AG04449 (cell line): ENCODE measurements at regions of chr18 and their contacts with region 1.

Region 1: GRCh38 chr18:46281185-46282176 is 177.3 kb downstream of the HAUS1 start:
- DNase-seq: no peak
- H3K4me3 ChIP-seq: no peak overlapping the region
- CTCF ChIP-seq: peak; percentile 97

Region 2: GRCh38 chr18:46042571-46043123 is 238.8 kb before region 1 on chr18:
- CTCF ChIA-PET with region 1: no interaction called
- POLR2A ChIA-PET with region 1: no interaction called
- DNase-seq: no peak
- H3K4me3 ChIP-seq: no peak overlapping the region
- CTCF ChIP-seq: no peak

Region 3: GRCh38 chr18:46148810-46149209 is 132.7 kb before region 1 on chr18:
- CTCF ChIA-PET with region 1: interaction called, 50 read pairs
- POLR2A ChIA-PET with region 1: no interaction called
- DNase-seq: no peak
- H3K4me3 ChIP-seq: no peak overlapping the region
- CTCF ChIP-seq: peak; percentile 35

Region 4: DNA sequence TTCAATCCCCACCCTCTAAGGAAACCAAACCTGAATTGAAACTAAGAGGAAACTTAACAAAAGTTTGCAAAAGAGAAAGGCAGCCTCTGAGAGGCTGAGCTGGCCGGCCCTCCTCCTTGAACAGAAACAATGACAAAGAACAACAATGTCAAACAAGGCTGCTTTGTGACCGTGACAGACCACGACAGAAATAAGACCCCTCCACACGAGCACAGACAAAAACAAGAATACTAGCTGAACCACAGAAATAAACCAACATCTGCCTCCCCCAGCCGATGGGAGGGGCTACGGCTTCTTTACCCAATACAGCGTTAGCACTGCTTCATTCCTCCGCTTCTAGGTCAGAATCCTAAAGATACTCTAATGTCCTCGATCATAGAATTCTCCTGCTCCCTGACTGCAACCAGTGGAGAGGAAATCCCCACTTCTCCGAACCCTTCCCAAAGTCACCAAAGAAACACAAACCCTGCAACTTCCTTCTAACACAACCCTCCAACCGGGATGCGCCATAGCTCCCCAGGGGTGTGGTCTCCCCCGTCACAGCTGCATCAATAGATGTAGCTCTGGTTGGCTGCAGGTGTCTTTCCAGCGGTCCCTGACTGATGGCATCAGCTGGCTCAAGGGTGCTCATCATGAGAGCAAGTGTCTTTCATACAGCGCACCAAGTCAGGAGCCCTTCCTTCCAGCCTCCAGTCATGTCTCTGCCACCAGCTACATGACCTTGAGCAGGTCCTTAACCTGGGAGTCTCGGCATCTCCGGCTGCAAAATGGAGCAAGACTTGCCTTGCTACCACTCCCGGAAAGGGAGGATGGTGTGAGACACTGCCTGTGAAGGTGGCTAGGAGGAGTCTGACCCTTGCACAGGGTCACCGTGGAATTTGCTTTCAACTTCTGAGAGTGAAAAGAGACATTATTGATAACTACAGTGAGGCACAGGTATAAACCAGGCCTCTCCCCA is 21.3 kb after region 1 on chr18:
- CTCF ChIA-PET with region 1: interaction called, 12 read pairs
- POLR2A ChIA-PET with region 1: no interaction called
- DNase-seq: no peak
- H3K4me3 ChIP-seq: no peak overlapping the region
- CTCF ChIP-seq: no peak

Region 5: GRCh38 chr18:46488471-46489213 is 207.2 kb after region 1 on chr18:
- CTCF ChIA-PET with region 1: interaction called, 82 read pairs
- POLR2A ChIA-PET with region 1: no interaction called
- DNase-seq: no peak
- H3K4me3 ChIP-seq: no peak overlapping the region
- CTCF ChIP-seq: no peak

Region 6: GRCh38 chr18:46660955-46661749 is 379.7 kb after region 1 on chr18:
- CTCF ChIA-PET with region 1: interaction called, 110 read pairs
- POLR2A ChIA-PET with region 1: no interaction called
- DNase-seq: no peak
- H3K4me3 ChIP-seq: no peak overlapping the region
- CTCF ChIP-seq: no peak